ENCODE measurements at regions of chr10 and their contacts with region 1.

Region 1: GRCh38 chr10:15209827-15210509 is 41.5 kb upstream of the NMT2 start:
- DNase-seq: no peak
- H3K4me3 ChIP-seq: no peak overlapping the region
- CTCF ChIP-seq: peak; percentile 82

Region 2: DNA sequence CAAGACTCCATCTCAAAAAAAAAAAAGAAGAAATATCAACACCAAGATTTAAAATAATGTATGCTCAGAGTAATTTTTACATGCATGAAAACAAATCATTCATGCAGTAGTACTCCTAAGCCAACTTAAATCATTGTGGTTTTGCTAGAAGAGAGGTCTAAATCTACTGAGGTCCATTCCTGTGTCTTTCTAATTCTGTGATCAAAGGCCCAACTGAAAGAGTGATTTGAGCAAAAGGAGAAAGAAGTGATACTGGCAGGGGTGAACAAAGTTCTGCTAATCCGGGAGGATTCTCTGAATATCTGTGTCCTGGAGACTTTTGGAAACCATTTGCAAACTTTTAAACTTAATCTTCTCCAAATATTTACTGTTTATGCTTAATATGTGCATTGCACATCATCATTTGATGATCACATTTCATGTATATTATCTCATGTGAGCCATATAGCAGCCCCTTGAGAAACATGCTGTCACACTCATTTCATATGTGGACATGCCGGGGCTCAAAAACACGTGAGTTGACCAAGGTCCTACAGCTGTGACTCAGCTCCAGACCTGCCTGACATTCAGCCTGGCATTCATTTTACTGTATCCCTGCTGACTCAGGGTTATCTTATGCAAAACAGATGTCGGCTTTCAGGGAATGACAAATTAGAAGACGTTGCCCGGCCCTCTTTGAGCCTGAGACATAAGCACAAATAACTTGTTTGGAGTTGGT is 511.7 kb before region 1 on chr10:
- CTCF ChIA-PET with region 1: no interaction called
- POLR2A ChIA-PET with region 1: no interaction called
- DNase-seq: peak; percentile 19
- H3K4me3 ChIP-seq: no peak overlapping the region
- CTCF ChIP-seq: no peak

Region 3: GRCh38 chr10:15227611-15228368 is 17.8 kb after region 1 on chr10:
- CTCF ChIA-PET with region 1: interaction called, 12 read pairs
- POLR2A ChIA-PET with region 1: no interaction called
- DNase-seq: no peak
- H3K4me3 ChIP-seq: no peak overlapping the region
- CTCF ChIP-seq: no peak